ENCODE measurements at regions of chr7 and their contacts with region 1.

Region 1: GRCh38 chr7:101321491-101322401 is at the start of gene IFT22:
- DNase-seq: peak; percentile 90
- ATAC-seq: peak; percentile 92
- H3K4me3 Mint-ChIP-seq: peak within 1 kb of the TSS; percentile 93
- H3K27ac Mint-ChIP-seq: peak within 1 kb of the TSS; percentile 96
- H3K4me1 Mint-ChIP-seq: peaks cover 12% of the 10 kb centered on the region
- H3K27me3 Mint-ChIP-seq: no peaks in the 10 kb centered on the region
- CTCF ChIP-seq: no peak
- total RNA-seq, gene IFT22: 13.7 to 16.6 TPM (median 15.5 TPM) in 3 replicates

Region 2: GRCh38 chr7:101363734-101364374 is 42.1 kb after region 1 on chr7:
- CTCF ChIA-PET with region 1: interaction called, 22 read pairs
- POLR2A ChIA-PET with region 1: interaction called, 3 read pairs
- DNase-seq: peak; percentile 75
- ATAC-seq: peak; percentile 79
- H3K4me3 Mint-ChIP-seq: peak overlapping the region; percentile 62
- H3K27ac Mint-ChIP-seq: no peak overlapping the region
- H3K4me1 Mint-ChIP-seq: peaks cover 28% of the 10 kb centered on the region
- H3K27me3 Mint-ChIP-seq: peaks cover 6% of the 10 kb centered on the region; the same call in 1 of the 2 replicates
- CTCF ChIP-seq: peak; percentile 91

Region 3: GRCh38 chr7:101436857-101437576 is 115.3 kb after region 1 on chr7:
- CTCF ChIA-PET with region 1: interaction called, 15 read pairs
- POLR2A ChIA-PET with region 1: no interaction called
- DNase-seq: peak; percentile 94
- ATAC-seq: peak; percentile 87
- H3K4me3 Mint-ChIP-seq: no peak overlapping the region
- H3K27ac Mint-ChIP-seq: peak overlapping the region; percentile 79
- H3K4me1 Mint-ChIP-seq: peaks cover 26% of the 10 kb centered on the region
- H3K27me3 Mint-ChIP-seq: no peaks in the 10 kb centered on the region
- CTCF ChIP-seq: no peak

Region 4: GRCh38 chr7:101465576-101466196 is 143.9 kb after region 1 on chr7:
- CTCF ChIA-PET with region 1: no interaction called
- POLR2A ChIA-PET with region 1: no interaction called
- DNase-seq: no peak
- ATAC-seq: no peak
- H3K4me3 Mint-ChIP-seq: no peak overlapping the region
- H3K27ac Mint-ChIP-seq: peak overlapping the region; percentile 53
- H3K4me1 Mint-ChIP-seq: peaks cover 40% of the 10 kb centered on the region
- H3K27me3 Mint-ChIP-seq: no peaks in the 10 kb centered on the region
- CTCF ChIP-seq: no peak

Region 5: GRCh38 chr7:101502466-101503098 is 180.8 kb after region 1 on chr7:
- CTCF ChIA-PET with region 1: interaction called, 10 read pairs
- POLR2A ChIA-PET with region 1: no interaction called
- DNase-seq: no peak
- ATAC-seq: no peak
- H3K4me3 Mint-ChIP-seq: no peak overlapping the region
- H3K27ac Mint-ChIP-seq: peak overlapping the region; percentile 48; the same call in 1 of the 2 replicates
- H3K4me1 Mint-ChIP-seq: peaks cover 49% of the 10 kb centered on the region
- H3K27me3 Mint-ChIP-seq: no peaks in the 10 kb centered on the region
- CTCF ChIP-seq: no peak